Tibial artery (tissue), 4 donors: ENCODE measurements at regions of chr3 and their contacts with region 1.

Region 1: DNA sequence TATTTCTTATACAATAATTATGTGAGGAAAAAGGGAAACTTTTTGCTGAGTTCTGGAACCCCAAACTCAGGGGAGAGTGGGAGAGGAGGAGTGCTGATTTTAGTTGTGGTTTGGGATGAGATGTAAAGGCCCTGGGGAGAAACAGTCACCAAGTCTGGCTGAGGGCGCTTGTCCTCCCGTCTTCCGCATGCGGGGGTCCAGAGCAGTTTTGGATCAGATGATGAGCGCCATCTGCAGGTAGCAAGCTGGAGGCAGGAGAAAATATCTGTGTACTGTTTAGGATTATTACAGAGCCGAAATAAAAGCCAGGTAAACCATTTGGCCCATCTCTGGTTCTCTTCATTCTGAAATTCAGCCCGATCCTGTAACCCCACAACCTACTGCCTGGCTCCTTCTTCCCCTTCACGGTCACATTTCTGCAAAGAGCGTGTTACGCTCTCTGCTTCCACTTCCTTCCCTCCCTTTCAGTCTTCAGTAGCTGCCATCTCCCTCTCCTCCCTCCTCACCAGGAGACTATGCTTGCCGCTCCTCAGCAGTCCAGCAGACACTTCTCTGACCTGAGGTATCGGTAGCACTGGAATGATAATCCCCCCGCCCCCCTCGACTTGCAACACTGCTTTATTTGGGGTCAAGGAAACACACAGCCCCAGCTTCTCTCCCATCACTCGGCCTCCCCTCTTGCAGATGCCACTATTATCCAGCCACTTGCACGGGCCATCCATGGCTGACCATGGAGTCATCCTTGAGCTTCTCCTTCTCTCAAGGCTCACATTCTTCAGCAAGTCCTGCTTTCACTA is 1.4 kb upstream of the PARP14 start:
- DNase-seq: peak; percentile 87 to 89
- H3K4me3 ChIP-seq: peak overlapping the region; percentile 71 to 89
- H3K27ac ChIP-seq: peak overlapping the region; percentile 92
- H3K4me1 ChIP-seq: peaks cover 0 to 27% (median 18%) of the 10 kb centered on the region in 4 donors
- H3K27me3 ChIP-seq: no peaks in the 10 kb centered on the region
- CTCF ChIP-seq: peak; percentile 77

Region 2: DNA sequence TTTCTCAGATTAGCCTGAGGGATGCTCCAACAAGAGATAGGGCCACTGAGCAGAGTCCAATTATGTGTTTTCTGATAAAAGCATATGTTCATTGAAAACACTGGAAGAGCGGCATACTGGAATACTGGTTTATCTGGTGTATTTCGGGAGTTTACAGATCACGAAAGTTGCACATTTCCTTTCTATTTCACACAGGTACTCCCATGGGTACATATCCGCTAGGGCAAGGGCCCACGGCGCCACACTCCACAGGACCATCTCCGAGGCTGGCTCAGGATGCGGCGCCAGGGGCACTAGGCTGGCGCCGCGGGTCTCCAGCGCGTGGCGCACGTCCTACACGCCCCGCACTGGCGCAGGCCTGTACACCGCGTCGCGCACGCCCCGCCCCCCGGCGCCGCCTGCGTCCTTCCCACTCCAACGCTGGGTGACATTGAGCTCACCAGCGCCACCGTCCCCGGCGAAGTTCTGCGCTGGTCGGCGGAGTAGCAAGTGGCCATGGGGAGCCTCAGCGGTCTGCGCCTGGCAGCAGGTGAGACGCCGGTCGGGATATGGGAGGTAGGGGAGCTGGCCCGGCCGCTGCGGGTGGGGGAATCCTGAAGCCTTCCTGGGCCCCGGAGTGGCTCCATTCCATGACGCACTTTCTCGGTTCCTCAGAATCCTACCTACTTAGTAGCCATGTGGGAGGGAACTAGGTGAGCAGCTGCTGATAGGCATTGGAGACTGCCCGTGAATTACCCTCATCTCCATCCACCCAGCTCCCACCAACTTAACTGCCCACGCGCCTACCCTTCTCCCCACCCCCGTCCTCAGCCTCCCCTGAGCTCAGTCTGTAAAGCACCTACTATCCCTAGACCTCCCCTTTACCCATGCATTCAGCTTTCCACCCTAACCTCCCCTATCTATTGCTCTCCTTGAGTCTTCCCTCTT is 295.2 kb before region 1 on chr3 and contains the start of gene FAM162A:
- intact Hi-C with region 1: loop called (anchors 10 kb)
- DNase-seq: peak; percentile 94 to 96
- H3K4me3 ChIP-seq: peak within 1 kb of the TSS; percentile 72 to 82
- H3K27ac ChIP-seq: peak within 1 kb of the TSS; percentile 87 to 90
- H3K4me1 ChIP-seq: peaks cover 0 to 24% (median 12%) of the 10 kb centered on the region in 4 donors
- H3K27me3 ChIP-seq: no peaks in the 10 kb centered on the region
- CTCF ChIP-seq: peak; percentile 38 to 48

Region 3: GRCh38 chr3:122563717-122564025 is 115.6 kb before region 1 on chr3:
- intact Hi-C with region 1: loop called (anchors 2 kb)
- DNase-seq: peak in 1 of 2 donors; percentile 30
- H3K4me3 ChIP-seq: peak overlapping the region; percentile 79 to 93
- H3K27ac ChIP-seq: peak overlapping the region; percentile 83 to 90
- H3K4me1 ChIP-seq: peaks cover 0 to 28% (median 13%) of the 10 kb centered on the region in 4 donors
- H3K27me3 ChIP-seq: no peaks in the 10 kb centered on the region
- CTCF ChIP-seq: no peak